ENCODE measurements at regions of chr16 and their contacts with region 1.

Region 1: DNA sequence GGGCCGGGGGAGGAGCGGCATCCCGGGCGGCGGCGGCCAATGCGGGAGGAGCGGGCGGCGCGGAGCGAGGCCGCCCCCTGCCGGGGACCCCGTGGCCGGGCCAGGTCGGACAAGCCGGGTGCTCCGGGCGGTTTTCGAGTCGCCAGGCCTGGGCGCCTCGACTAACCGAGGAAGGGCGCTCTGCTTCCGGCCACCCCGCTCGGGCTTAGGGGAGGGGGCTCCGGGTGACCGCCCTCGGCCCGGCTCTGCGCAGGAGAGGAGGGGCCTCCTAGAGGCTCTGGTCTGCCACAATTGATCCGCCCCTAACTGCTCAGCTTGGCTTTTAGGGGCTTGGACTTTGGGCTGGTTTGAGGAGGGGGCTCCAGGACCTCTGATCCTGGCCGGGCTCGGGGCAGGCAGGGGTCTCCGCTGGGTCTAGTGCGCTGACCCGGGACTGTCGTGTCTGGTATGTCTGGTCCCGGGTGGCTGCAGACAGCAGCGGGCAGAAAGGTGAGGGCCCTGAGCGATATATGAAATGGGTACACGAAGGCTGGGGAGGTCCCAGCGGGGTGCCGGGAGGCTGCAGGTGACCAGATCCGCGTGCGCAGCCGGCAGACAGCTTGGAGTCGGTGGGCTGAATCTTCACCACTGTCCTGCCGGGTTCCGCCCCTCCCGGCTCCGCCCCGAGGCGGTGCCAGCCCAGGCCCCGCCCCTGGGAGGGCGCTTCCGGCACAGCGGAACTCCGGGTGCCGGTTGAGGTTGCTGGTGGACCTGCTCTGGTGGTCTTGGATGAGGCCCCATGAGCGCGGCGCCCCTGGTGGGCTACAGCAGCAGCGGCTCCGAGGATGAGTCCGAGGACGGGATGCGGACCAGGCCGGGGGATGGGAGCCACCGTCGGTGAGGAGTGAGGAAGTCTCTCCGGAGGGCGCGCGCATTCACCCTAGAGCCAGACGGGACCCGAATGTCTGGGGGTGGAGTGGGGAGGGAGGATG is at the start of gene USB1:
- DNase-seq: peak; percentile 78
- H3K4me3 Mint-ChIP-seq: peak within 1 kb of the TSS; percentile 91
- H3K27ac Mint-ChIP-seq: peak within 1 kb of the TSS; percentile 71
- H3K4me1 Mint-ChIP-seq: peaks cover 51% of the 10 kb centered on the region
- H3K27me3 Mint-ChIP-seq: no peaks in the 10 kb centered on the region
- total RNA-seq, gene USB1: 30.6 to 32.3 TPM

Region 2: DNA sequence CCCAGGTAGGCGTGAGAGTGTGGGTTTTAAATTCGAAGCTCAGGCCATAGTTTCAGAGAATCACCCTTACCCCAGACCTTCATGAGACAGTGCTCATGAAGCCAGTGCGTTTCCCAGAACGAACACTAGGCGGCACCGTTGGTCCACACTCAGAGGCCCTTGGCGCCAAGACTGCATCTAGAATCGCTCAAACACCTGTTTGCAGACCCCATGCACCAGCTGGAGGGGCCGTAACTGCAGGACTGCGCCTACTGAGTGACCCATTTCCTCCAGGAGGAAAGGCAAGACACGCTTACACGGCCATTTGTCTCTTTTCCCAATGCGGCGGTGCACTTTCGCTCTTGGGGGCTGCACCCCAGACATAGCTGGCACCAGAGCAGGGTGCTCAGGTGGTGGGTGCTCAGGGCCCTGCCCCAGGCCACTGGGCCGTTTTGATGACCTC is 424.5 kb before region 1 on chr16:
- CTCF ChIA-PET with region 1: no interaction called
- intact Hi-C with region 1: loop called (anchors 1 kb)
- DNase-seq: peak; percentile 94
- H3K4me3 Mint-ChIP-seq: no peak overlapping the region
- H3K27ac Mint-ChIP-seq: no peak overlapping the region
- H3K4me1 Mint-ChIP-seq: peaks cover 9% of the 10 kb centered on the region
- H3K27me3 Mint-ChIP-seq: peaks cover 3% of the 10 kb centered on the region

Region 3: DNA sequence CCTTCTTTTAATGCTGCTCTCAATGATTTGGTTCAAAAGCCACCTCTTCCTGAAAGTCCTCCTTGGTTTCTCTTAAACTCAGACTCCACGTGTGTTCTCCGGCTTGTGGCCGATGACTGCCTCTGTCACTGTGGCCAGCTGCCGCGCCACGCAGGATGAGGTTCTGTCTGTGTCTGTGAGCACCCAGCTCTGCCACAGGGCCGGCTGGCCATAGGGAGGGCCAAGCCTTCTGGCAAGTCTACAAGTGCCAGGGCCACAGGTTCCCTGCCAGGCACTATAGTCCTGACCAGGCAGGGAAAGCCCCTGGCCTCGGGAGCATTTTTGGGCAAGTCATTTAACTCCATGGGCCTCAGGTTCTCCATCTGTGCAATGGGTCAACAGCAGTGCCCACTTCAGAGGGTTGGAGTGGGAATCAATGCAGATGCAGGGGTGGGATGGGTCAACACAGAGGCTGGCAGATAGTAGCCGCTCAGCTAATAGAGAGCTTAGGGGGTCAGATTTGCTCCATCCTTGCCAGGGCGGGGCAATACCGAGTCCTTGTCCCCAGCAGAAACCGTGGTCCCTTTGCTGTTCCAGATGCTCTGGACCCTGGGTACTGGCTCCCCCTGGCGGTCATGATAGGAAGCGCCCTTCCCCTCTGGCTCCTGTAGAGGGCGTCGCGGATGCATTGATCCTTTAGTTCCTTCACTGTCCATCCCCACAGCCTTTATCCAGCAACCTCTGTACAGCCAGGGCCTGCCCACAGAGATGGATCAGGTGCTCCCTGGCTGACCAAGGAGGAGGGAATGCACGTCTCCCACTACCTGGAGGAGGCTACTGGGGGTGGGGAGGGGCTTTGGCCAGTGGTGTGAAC is 352.2 kb before region 1 on chr16:
- CTCF ChIA-PET with region 1: interaction called, 3 read pairs
- intact Hi-C with region 1: loop called (anchors 1 kb)
- DNase-seq: peak; percentile 93
- H3K4me3 Mint-ChIP-seq: no peak overlapping the region
- H3K27ac Mint-ChIP-seq: peak overlapping the region; percentile 44
- H3K4me1 Mint-ChIP-seq: peaks cover 17% of the 10 kb centered on the region
- H3K27me3 Mint-ChIP-seq: no peaks in the 10 kb centered on the region

Region 4: DNA sequence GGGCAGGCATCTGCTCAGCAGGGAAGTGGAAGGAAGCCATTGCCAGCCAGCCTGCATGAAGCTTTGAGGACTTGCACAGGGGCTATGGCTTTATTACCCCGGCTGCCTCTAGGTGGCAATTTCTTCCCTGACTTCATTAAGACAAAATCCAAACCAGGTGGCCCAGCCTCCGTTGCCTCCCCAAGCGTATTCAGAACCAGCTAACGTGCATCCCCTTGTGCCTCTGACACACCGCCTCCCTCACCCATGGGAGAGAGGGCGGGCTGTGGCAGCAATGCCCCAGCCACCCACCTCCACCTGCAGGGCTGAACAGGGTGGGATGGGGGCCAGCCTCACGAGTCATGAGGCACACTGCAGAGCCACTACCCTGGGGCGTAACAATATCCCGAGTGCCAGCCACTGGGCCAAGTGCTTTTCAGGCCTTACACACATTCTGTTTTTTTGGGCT is 205.5 kb before region 1 on chr16:
- CTCF ChIA-PET with region 1: interaction called, 3 read pairs
- intact Hi-C with region 1: loop called (anchors 1 kb)
- DNase-seq: peak; percentile 61
- H3K4me3 Mint-ChIP-seq: no peak overlapping the region
- H3K27ac Mint-ChIP-seq: no peak overlapping the region
- H3K4me1 Mint-ChIP-seq: peaks cover 16% of the 10 kb centered on the region
- H3K27me3 Mint-ChIP-seq: peaks cover 11% of the 10 kb centered on the region

Region 5: GRCh38 chr16:57899771-57900661 is 101.0 kb before region 1 on chr16:
- CTCF ChIA-PET with region 1: interaction called, 30 read pairs
- intact Hi-C with region 1: loop called (anchors 1 kb)
- DNase-seq: peak; percentile 83
- H3K4me3 Mint-ChIP-seq: no peak overlapping the region
- H3K27ac Mint-ChIP-seq: no peak overlapping the region
- H3K4me1 Mint-ChIP-seq: no peaks in the 10 kb centered on the region
- H3K27me3 Mint-ChIP-seq: peaks cover 3% of the 10 kb centered on the region

Region 6: GRCh38 chr16:58098207-58099096 is 97.5 kb after region 1 on chr16:
- CTCF ChIA-PET with region 1: no interaction called
- intact Hi-C with region 1: no loop called
- DNase-seq: no peak
- H3K4me3 Mint-ChIP-seq: no peak overlapping the region
- H3K27ac Mint-ChIP-seq: no peak overlapping the region
- H3K4me1 Mint-ChIP-seq: no peaks in the 10 kb centered on the region
- H3K27me3 Mint-ChIP-seq: no peaks in the 10 kb centered on the region

Region 7: DNA sequence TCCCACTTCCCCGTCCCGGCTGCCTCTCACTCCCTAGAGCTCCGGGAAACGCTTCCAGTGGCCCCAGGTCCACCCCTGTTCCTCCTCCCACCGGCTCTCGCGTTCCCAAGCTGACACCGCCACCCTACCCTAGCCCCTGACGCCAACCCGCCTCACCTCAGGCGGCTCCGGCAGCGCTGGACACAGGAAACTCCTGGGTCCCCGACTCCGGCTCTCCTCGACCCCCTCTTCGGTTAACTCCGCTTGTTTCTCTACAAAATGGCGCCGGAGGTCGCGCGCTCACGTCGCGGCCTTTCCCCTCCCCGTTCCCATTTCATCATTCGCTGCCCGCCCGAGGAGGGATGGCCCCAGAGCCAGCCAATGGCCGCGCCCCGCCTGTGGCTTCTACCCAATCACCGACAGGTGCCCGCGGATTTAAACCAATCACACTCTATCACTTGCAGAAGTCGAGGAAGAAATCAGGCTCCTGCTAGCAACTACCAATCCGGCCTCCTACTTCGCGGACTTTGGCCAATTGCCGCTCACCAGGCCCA is 628.6 kb after region 1 on chr16 and contains the start of gene CNOT1:
- CTCF ChIA-PET with region 1: no interaction called
- intact Hi-C with region 1: loop called (anchors 10 kb)
- DNase-seq: peak; percentile 99
- H3K4me3 Mint-ChIP-seq: peak within 1 kb of the TSS; percentile 99
- H3K27ac Mint-ChIP-seq: peak within 1 kb of the TSS; percentile 100
- H3K4me1 Mint-ChIP-seq: peaks cover 25% of the 10 kb centered on the region
- H3K27me3 Mint-ChIP-seq: peaks cover 1% of the 10 kb centered on the region
- total RNA-seq, gene CNOT1: 283 to 287 TPM

Measured in activated naive CD4-positive, alpha-beta T cell treated with anti-CD3 and anti-CD28 coated beads for 36 hours (primary cell).